Activated CD4-positive, alpha-beta memory T cell treated with anti-CD3 and anti-CD28 coated beads, Interleukin-2, amount 10 ng/mL, durations not matched to agents 7 days and 5 days (primary cell): ENCODE measurements at regions of chr5 and their contacts with region 1.

Region 1: GRCh38 chr5:65562731-65563701 is at the starts of genes CENPK and PPWD1:
- DNase-seq: peak; percentile 97
- H3K4me3 Mint-ChIP-seq: peak within 1 kb of the TSS; percentile 93
- H3K27ac Mint-ChIP-seq: peak within 1 kb of the TSS; percentile 98
- H3K4me1 Mint-ChIP-seq: peaks cover 58% of the 10 kb centered on the region
- H3K27me3 Mint-ChIP-seq: no peaks in the 10 kb centered on the region
- total RNA-seq, gene CENPK: 86.0 to 88.7 TPM
- total RNA-seq, gene PPWD1: 46.7 to 50.0 TPM

Region 2: DNA sequence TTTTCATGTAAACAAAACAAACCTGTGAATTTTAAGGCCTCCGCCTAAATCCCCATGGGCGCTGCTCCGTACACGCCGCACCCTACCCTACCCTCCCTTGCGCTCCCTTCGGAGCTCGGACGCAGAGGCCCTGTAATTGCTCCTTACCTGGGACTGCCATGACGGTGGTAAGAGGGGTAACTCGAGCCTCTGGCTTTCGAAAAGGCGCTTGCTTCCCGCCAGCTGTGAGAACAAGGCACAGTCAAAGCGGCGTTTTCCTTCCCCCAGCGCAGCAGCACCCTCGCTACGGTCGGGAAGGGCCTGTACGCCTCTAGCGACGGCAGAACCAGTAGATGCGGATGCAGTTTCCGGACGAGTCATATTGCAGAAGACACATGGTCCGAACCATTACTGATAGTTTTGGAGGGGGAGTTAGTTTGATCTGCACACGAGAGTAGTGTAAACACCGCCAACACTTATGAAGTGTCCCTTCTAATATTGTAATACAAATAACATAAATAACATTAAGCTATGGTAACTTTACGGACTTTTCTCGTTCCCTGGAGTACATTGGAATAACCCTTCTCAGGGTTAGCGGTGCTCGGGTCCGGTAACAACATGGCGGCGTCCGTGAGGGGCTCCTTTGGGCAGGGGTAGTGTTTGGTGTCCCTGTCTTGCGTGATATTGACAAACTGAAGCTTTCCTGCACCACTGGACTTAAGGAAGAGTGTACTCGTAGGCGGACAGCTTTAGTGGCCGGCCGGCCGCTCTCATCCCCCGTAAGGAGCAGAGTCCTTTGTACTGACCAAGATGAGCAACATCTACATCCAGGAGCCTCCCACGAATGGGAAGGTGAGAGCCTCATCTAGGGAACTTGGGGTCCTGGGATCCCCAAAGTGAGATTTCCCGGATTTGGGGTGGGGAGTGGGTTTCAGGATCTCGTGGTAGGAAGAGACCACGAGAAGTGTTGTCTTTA is 794.4 kb before region 1 on chr5 and contains the starts of genes CWC27 and SREK1IP1:
- CTCF ChIA-PET with region 1: no interaction called
- POLR2A ChIA-PET with region 1: interaction called, 16 read pairs
- DNase-seq: peak; percentile 86
- H3K4me3 Mint-ChIP-seq: peak within 1 kb of the TSS; percentile 95
- H3K27ac Mint-ChIP-seq: peak within 1 kb of the TSS; percentile 91
- H3K4me1 Mint-ChIP-seq: peaks cover 50% of the 10 kb centered on the region
- H3K27me3 Mint-ChIP-seq: no peaks in the 10 kb centered on the region
- total RNA-seq, gene CWC27: 20.5 to 23.5 TPM
- total RNA-seq, gene SREK1IP1: 28.1 to 30.0 TPM

Region 3: GRCh38 chr5:65481635-65482295 is 81.3 kb before region 1 on chr5 and contains the start of gene ADAMTS6:
- CTCF ChIA-PET with region 1: interaction called, 3 read pairs
- POLR2A ChIA-PET with region 1: interaction called, 41 read pairs
- DNase-seq: peak; percentile 78
- H3K4me3 Mint-ChIP-seq: no peak within 1 kb of the TSS
- H3K27ac Mint-ChIP-seq: peak within 1 kb of the TSS; percentile 61
- H3K4me1 Mint-ChIP-seq: peaks cover 15% of the 10 kb centered on the region
- H3K27me3 Mint-ChIP-seq: no peaks in the 10 kb centered on the region
- total RNA-seq, gene ADAMTS6: 1.6 to 1.7 TPM

Region 4: DNA sequence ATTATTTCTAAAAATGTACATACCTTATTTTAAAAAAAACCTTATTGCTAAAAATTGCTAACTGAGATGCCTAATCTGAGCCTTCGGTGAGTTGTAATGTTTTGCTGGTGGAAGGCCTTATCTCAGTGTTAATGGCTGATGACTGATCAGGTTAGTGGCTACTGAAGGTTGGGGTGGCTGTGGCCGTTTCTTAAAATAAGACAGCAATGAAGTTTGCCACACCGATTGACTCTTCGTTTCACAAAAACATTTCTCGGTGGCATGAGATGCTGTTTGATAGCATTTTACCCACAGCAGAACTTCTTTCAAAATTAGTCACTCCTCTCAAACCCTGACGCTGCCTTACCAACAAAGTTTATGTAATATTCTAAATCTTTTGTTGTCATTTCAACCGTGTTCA is 14.7 kb before region 1 on chr5:
- CTCF ChIA-PET with region 1: interaction called, 11 read pairs
- POLR2A ChIA-PET with region 1: interaction called, 44 read pairs
- DNase-seq: peak; percentile 35
- H3K4me3 Mint-ChIP-seq: no peak overlapping the region
- H3K27ac Mint-ChIP-seq: peak overlapping the region; percentile 62
- H3K4me1 Mint-ChIP-seq: peaks cover 43% of the 10 kb centered on the region
- H3K27me3 Mint-ChIP-seq: no peaks in the 10 kb centered on the region

Region 5: GRCh38 chr5:65624571-65625555 is 61.8 kb after region 1 on chr5 and contains the starts of genes SHLD3 and TRAPPC13:
- CTCF ChIA-PET with region 1: interaction called, 11 read pairs
- POLR2A ChIA-PET with region 1: interaction called, 107 read pairs
- DNase-seq: peak; percentile 86
- H3K4me3 Mint-ChIP-seq: peak within 1 kb of the TSS; percentile 92
- H3K27ac Mint-ChIP-seq: peak within 1 kb of the TSS; percentile 94
- H3K4me1 Mint-ChIP-seq: peaks cover 44% of the 10 kb centered on the region
- H3K27me3 Mint-ChIP-seq: no peaks in the 10 kb centered on the region
- total RNA-seq, gene SHLD3: 3.6 to 4.3 TPM
- total RNA-seq, gene TRAPPC13: 21.2 to 23.3 TPM

Region 6: GRCh38 chr5:66144074-66144833 is 581.2 kb after region 1 on chr5 and contains the start of gene SREK1:
- CTCF ChIA-PET with region 1: no interaction called
- POLR2A ChIA-PET with region 1: interaction called, 11 read pairs
- DNase-seq: peak; percentile 88
- H3K4me3 Mint-ChIP-seq: peak within 1 kb of the TSS; percentile 97
- H3K27ac Mint-ChIP-seq: peak within 1 kb of the TSS; percentile 99
- H3K4me1 Mint-ChIP-seq: peaks cover 31% of the 10 kb centered on the region
- H3K27me3 Mint-ChIP-seq: no peaks in the 10 kb centered on the region
- total RNA-seq, gene SREK1: 52.3 to 53.4 TPM